Endothelial cell of umbilical vein (primary cell): ENCODE measurements at regions of chr4 and their contacts with region 1.

Region 1: DNA sequence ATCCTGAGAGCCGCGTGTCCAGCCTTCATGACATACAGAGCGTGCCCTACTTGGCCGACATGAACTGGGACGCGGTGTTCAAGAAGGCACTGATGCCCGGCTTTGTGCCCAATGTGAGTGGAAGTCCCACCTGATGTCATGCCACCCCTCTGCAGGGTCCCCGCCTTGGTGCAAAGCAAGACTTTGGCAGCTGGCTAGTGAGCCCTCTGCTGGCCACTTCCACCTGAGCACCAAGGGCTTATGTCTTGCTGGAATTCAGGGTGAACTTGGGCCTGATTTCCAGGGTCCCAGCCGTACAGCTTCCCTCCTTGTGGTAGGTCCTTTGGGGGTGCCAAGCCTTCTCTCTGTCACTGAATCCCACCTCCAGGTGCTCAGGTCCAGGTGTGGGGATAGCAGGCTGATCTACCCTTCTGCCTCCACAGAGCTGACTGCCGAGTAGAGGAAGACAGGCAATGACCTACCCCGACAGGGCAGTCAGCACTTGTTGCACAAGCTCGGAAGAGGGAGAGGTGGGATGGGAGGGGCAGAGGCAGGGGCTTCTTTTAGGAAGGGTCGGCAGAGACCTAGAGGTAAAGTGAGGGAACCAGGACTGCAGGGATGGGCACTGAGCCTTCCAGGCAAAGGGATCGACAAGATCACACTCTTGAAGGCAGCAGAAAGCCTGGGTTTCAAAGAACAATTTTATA is 248.1 kb downstream of the EVC2 start:
- DNase-seq: peak; percentile 7
- H3K4me3 ChIP-seq: no peak overlapping the region
- H3K27ac ChIP-seq: no peak overlapping the region
- H3K4me1 ChIP-seq: no peaks in the 10 kb centered on the region
- H3K27me3 ChIP-seq: no peaks in the 10 kb centered on the region
- CTCF ChIP-seq: peak; percentile 36 to 64
- POLR2A ChIP-seq: no peak

Region 2: GRCh38 chr4:4985844-4986243 is 474.4 kb before region 1 on chr4:
- CTCF ChIA-PET with region 1: interaction called, 13 read pairs
- POLR2A ChIA-PET with region 1: no interaction called
- dilution Hi-C with region 1: no loop called
- intact Hi-C with region 1: no loop called
- DNase-seq: no peak
- H3K4me3 ChIP-seq: no peak overlapping the region
- H3K27ac ChIP-seq: no peak overlapping the region
- H3K4me1 ChIP-seq: no peaks in the 10 kb centered on the region
- H3K27me3 ChIP-seq: no peaks in the 10 kb centered on the region
- CTCF ChIP-seq: no peak
- POLR2A ChIP-seq: no peak

Region 3: DNA sequence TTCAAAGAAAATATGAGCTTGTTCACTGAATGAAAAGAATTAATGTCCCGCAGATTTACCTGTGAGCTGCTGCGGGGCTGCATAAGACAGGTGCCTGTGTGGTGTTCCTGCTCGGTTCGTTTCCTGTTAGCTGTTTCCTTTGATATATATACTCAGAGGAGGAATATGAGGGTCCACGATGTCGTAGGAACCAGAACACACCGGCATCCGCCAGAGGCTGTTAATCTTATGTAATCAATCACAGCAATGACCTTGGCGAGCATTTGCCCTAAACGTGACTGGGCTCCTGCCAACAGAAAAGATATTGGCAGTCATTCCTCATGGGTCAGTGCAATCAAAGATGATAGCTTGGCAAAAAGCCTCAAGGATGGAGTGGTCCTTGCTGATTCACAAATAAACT is 12.0 kb before region 1 on chr4:
- CTCF ChIA-PET with region 1: interaction called, 12 read pairs
- POLR2A ChIA-PET with region 1: no interaction called
- dilution Hi-C with region 1: no loop called
- intact Hi-C with region 1: no loop called
- DNase-seq: no peak
- H3K4me3 ChIP-seq: no peak overlapping the region
- H3K27ac ChIP-seq: no peak overlapping the region
- H3K4me1 ChIP-seq: no peaks in the 10 kb centered on the region
- H3K27me3 ChIP-seq: no peaks in the 10 kb centered on the region
- CTCF ChIP-seq: no peak
- POLR2A ChIP-seq: no peak

Region 4: DNA sequence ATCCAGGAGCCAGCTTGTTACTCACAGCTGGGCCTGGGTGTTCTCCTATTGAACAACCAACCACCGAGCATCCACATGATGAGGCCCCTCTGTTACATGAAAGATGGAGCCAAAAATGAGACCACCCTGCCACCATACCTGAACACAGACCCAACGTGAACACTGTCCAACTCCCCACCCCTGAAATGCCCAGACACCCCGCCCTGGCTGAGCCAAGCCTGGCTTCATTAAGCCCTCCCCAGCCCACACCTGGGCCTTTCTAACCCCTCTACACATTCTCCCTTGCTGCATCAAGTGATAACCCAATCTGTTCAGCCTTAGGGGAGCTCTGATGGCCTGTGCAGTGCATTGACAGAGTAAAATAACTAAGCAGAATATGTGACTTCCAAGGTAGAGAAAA is 331.4 kb after region 1 on chr4:
- CTCF ChIA-PET with region 1: interaction called, 4 read pairs
- POLR2A ChIA-PET with region 1: no interaction called
- dilution Hi-C with region 1: no loop called
- intact Hi-C with region 1: loop called (anchors 1 kb)
- DNase-seq: no peak
- H3K4me3 ChIP-seq: no peak overlapping the region
- H3K27ac ChIP-seq: no peak overlapping the region
- H3K4me1 ChIP-seq: no peaks in the 10 kb centered on the region
- H3K27me3 ChIP-seq: no peaks in the 10 kb centered on the region
- CTCF ChIP-seq: no peak
- POLR2A ChIP-seq: no peak